Right lobe of liver (tissue), 6 donors: ENCODE measurements at regions of chr15 and their contacts with region 1.

Region 1: GRCh38 chr15:74036271-74037170 is 42.0 kb downstream of the PML start:
- DNase-seq: peak in 2 of 3 donors; percentile 58 to 65
- ATAC-seq: peak; percentile 57 to 78 (median 65)
- H3K4me3 ChIP-seq: no peak overlapping the region
- H3K27ac ChIP-seq: no peak overlapping the region
- H3K4me1 ChIP-seq: no peaks in the 10 kb centered on the region
- H3K27me3 ChIP-seq: no peaks in the 10 kb centered on the region
- CTCF ChIP-seq: peak; percentile 40 to 61 (median 54)
- POLR2A ChIP-seq: no peak

Region 2: DNA sequence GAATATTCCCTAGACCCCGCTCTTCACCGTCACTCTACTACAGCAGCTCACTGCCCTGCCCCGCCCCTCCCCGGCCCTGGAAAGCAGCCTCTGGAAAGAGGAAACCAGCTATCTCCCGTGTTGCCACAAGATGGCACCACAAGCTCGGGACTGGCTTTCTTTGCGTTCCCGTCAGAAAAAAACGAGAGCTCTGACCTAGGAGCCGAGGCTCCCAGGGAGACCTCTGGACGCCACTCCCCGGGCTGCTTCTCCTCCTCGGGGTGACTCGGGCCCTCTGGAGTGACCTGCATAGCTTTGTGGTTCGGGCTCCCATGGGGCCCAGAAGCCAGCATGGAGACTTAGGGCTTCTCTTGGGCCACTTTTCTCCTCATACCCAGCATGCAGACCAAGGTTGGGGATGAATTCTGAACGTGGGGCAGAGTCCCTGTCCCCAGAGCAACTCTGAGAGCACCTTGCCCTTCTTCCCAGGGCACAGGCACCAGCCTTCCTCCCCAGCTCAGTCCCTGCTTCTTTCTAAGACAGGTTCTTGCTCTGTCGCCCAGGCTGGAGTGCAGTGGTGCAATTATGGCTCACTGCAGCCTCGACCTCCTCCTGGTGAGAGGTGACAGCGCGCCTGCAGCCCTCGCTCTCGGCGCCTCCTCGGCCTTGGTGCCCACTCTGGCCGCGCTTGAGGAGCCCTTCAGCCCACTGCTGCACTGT is 63.4 kb before region 1 on chr15:
- intact Hi-C with region 1: loop called (anchors 5 kb)
- DNase-seq: peak; percentile 82
- ATAC-seq: peak; percentile 98 to 100 (median 98)
- H3K4me3 ChIP-seq: no peak overlapping the region
- H3K27ac ChIP-seq: no peak overlapping the region
- H3K4me1 ChIP-seq: peaks cover 0 to 6% (median 0%) of the 10 kb centered on the region in 4 donors
- H3K27me3 ChIP-seq: no peaks in the 10 kb centered on the region
- CTCF ChIP-seq: peak; percentile 73 to 93 (median 80)
- POLR2A ChIP-seq: no peak

Region 3: GRCh38 chr15:73979636-73980035 is 56.9 kb before region 1 on chr15:
- intact Hi-C with region 1: loop called (anchors 5 kb)
- DNase-seq: peak in 1 of 3 donors; percentile 1
- ATAC-seq: no peak
- H3K4me3 ChIP-seq: no peak overlapping the region
- H3K27ac ChIP-seq: no peak overlapping the region
- H3K4me1 ChIP-seq: peaks cover 0 to 11% (median 0%) of the 10 kb centered on the region in 4 donors
- H3K27me3 ChIP-seq: no peaks in the 10 kb centered on the region
- CTCF ChIP-seq: no peak
- POLR2A ChIP-seq: no peak